ENCODE measurements at regions of chr16 and their contacts with region 1.

Region 1: GRCh38 chr16:67800338-67800926 is 5.9 kb downstream of the RANBP10 start:
- DNase-seq: no peak
- H3K4me3 ChIP-seq: no peak overlapping the region
- H3K27ac ChIP-seq: no peak overlapping the region
- H3K4me1 ChIP-seq: peaks cover 7 to 22% of the 10 kb centered on the region in 2 donors
- H3K27me3 ChIP-seq: no peaks in the 10 kb centered on the region
- CTCF ChIP-seq: no peak
- POLR2A ChIP-seq: no peak

Region 2: DNA sequence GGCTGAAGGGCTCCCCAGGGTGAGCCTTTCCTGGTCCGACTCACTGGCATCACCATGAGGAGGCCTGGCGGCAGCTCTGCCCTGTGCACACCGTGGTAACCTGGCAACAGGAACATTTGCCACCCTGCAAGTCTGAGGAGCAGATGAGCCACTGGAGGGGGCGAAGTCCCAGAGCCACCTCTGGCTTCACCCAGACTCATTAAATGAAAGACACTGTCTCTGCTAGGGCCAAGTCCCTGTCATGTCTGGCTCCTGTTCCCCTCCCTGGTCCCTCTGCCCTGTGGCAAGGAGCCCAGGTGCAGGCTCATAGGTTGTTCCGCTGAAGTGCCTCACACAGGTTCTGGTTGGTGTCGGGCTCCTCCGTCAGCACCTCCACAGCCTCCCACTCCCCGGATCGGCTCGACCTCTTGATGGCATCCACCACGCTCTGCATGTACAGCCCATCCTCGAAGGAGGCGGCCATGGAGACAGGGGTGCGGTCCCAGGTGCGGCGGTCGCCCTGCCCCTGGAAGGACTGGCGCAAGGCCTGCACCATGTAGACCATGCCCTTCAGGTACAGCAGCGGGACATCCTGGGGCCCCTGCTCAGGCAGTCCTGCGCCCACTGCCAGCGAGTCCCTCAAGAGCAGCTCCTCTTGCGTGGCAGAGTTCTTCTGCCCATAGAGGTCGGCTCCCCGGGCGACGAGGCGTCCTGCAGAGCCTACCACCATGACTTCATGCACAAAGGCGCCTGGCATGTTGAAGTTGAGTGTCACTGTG is 125.4 kb before region 1 on chr16:
- intact Hi-C with region 1: loop called (anchors 5 kb)
- DNase-seq: peak in 1 of 2 donors; percentile 23
- H3K4me3 ChIP-seq: no peak overlapping the region
- H3K27ac ChIP-seq: peak overlapping the region in 2 of 3 donors; percentile 77 to 79
- H3K4me1 ChIP-seq: peaks cover 42 to 63% of the 10 kb centered on the region in 2 donors
- H3K27me3 ChIP-seq: no peaks in the 10 kb centered on the region
- CTCF ChIP-seq: no peak
- POLR2A ChIP-seq: no peak

Region 3: GRCh38 chr16:67719048-67719777 is 81.2 kb before region 1 on chr16 and contains the start of gene GFOD2:
- intact Hi-C with region 1: loop called (anchors 5 kb)
- DNase-seq: peak; percentile 94 to 95
- H3K4me3 ChIP-seq: peak within 1 kb of the TSS; percentile 4 to 97 (median 46)
- H3K27ac ChIP-seq: peak within 1 kb of the TSS; percentile 68 to 75 (median 75)
- H3K4me1 ChIP-seq: peaks cover 12 to 16% of the 10 kb centered on the region in 2 donors
- H3K27me3 ChIP-seq: no peaks in the 10 kb centered on the region
- CTCF ChIP-seq: no peak
- POLR2A ChIP-seq: peak in 1 of 2 donors; percentile 85
- total RNA-seq, gene GFOD2: 10.9 to 27.5 (median 23.7) TPM

Region 4: DNA sequence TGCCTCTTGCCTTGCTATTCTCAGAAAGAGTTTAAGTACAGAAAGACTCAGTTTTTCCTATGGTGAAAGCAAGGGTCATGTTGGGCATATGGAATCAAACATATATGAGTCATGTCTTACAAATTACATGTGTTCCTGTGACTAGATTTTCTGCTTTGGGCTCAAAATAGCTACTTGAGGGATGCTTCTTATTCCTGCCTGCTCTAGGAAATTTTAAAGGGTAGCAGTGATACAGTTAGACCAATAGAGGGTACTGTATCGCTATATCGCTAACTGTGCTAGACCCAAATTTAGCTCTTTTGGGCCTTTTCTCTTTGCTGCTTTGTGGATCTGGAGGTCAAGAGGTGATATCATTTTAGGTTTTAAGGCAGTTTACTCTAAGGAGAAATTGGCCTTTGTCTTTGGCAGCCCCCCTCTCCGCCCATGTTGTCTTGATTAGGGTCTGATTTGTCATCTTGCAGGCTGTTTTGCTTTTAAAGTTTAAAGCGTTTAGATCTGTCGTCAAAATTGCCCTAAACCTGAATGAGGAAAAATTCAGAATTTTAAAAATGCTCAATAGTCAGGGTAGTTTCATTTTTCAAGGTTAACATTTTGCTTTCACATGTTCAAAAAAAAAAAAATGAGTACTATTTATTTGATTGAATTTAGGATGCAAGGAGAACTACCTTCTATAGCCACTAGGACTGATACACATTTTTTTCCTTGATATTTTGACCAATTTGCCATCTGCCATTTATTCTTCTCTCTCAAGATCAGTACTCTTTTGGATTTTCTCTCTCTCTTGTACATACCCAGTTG is 293.6 kb after region 1 on chr16:
- intact Hi-C with region 1: no loop called
- DNase-seq: no peak
- H3K4me3 ChIP-seq: no peak overlapping the region
- H3K27ac ChIP-seq: peak overlapping the region in 1 of 3 donors; percentile 34
- H3K4me1 ChIP-seq: peaks cover 42 to 44% of the 10 kb centered on the region in 2 donors
- H3K27me3 ChIP-seq: no peaks in the 10 kb centered on the region
- CTCF ChIP-seq: peak in 3 of 6 experiments; percentile 23 to 39 (median 32)
- POLR2A ChIP-seq: no peak

Region 5: GRCh38 chr16:68244903-68245853 is 444.7 kb after region 1 on chr16 and contains the start of gene PLA2G15:
- intact Hi-C with region 1: no loop called
- DNase-seq: peak; percentile 94 to 96
- H3K4me3 ChIP-seq: peak within 1 kb of the TSS; percentile 71 to 83 (median 77)
- H3K27ac ChIP-seq: peak within 1 kb of the TSS in 2 of 3 donors; percentile 35 to 61
- H3K4me1 ChIP-seq: peaks cover 22 to 28% of the 10 kb centered on the region in 2 donors
- H3K27me3 ChIP-seq: no peaks in the 10 kb centered on the region
- CTCF ChIP-seq: no peak
- POLR2A ChIP-seq: peak in 1 of 2 donors; percentile 74
- total RNA-seq, gene PLA2G15: 20.8 to 40.3 (median 38.4) TPM